ENCODE measurements at regions of chr3 and their contacts with region 1.

Region 1: GRCh38 chr3:42749753-42750231 is 23.3 kb downstream of the CCDC13 start:
- DNase-seq: no peak
- H3K4me3 ChIP-seq: no peak overlapping the region
- H3K27ac ChIP-seq: no peak overlapping the region
- H3K4me1 ChIP-seq: peaks cover 0 to 11% (median 4%) of the 10 kb centered on the region in 4 experiments; a peak in 5 of 7 replicates
- H3K27me3 ChIP-seq: no peaks in the 10 kb centered on the region; a peak in 2 of 7 replicates
- CTCF ChIP-seq: peak; percentile 52 to 75 (median 64)
- EP300 ChIP-seq: no peak
- POLR2A ChIP-seq: no peak
- RAD21 ChIP-seq: peak; percentile 65 to 73

Region 2: DNA sequence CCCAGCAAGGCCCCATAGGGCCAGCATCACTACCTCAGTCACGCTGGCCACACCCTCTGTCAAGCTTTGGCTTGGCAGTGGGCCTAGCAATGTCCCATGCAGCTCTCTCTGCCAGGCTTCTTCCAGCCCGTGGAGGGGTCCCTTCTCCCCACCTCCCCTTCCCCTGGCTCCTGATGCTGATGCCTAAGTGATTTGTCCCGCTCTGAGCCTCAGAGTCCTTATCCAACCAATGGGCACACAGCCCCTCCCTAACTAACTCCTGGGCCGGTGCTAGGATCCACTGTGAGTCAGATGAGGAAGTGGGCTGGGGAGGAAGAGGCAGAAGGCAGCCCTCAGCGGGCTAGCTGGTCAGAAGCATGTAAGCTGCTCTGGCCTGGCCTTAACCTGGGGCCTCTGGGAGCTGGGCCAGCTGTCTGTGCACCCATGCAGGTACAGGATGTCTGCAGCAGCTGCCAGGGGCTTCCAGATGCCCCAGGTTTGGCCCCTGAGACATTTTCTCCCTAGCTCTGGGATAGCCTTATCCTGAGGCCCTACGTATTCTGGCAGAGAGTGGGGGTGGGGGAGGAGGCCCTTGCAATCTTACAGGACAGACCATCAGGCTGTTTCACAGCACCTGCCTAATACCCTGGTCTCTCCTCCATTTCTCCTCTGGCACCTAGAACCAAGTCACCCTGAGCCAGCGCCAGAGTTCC is 97.0 kb before region 1 on chr3:
- CTCF ChIA-PET with region 1: interaction called, 54 read pairs
- POLR2A ChIA-PET with region 1: interaction called, 9 read pairs
- DNase-seq: peak in 1 of 2 experiments; percentile 58
- H3K4me3 ChIP-seq: peak overlapping the region in 1 of 4 experiments; percentile 74; a peak in 1 of 8 replicates
- H3K27ac ChIP-seq: no peak overlapping the region
- H3K4me1 ChIP-seq: peaks cover 6 to 39% (median 30%) of the 10 kb centered on the region in 4 experiments
- H3K27me3 ChIP-seq: no peaks in the 10 kb centered on the region
- CTCF ChIP-seq: no peak
- EP300 ChIP-seq: no peak
- POLR2A ChIP-seq: no peak
- RAD21 ChIP-seq: no peak

Region 3: GRCh38 chr3:42690766-42691680 is 58.8 kb before region 1 on chr3:
- CTCF ChIA-PET with region 1: interaction called, 14 read pairs
- POLR2A ChIA-PET with region 1: interaction called, 3 read pairs
- DNase-seq: no peak
- H3K4me3 ChIP-seq: no peak overlapping the region
- H3K27ac ChIP-seq: no peak overlapping the region
- H3K4me1 ChIP-seq: peaks cover 0 to 10% (median 4%) of the 10 kb centered on the region in 4 experiments; a peak in 4 of 7 replicates
- H3K27me3 ChIP-seq: 0 out of 7 replicates have a peak, but pooled peaks cover 0 to 2% (median 0%) of the 10 kb centered on the region in 4 experiments
- CTCF ChIP-seq: no peak
- EP300 ChIP-seq: no peak
- POLR2A ChIP-seq: no peak
- RAD21 ChIP-seq: no peak

Region 4: DNA sequence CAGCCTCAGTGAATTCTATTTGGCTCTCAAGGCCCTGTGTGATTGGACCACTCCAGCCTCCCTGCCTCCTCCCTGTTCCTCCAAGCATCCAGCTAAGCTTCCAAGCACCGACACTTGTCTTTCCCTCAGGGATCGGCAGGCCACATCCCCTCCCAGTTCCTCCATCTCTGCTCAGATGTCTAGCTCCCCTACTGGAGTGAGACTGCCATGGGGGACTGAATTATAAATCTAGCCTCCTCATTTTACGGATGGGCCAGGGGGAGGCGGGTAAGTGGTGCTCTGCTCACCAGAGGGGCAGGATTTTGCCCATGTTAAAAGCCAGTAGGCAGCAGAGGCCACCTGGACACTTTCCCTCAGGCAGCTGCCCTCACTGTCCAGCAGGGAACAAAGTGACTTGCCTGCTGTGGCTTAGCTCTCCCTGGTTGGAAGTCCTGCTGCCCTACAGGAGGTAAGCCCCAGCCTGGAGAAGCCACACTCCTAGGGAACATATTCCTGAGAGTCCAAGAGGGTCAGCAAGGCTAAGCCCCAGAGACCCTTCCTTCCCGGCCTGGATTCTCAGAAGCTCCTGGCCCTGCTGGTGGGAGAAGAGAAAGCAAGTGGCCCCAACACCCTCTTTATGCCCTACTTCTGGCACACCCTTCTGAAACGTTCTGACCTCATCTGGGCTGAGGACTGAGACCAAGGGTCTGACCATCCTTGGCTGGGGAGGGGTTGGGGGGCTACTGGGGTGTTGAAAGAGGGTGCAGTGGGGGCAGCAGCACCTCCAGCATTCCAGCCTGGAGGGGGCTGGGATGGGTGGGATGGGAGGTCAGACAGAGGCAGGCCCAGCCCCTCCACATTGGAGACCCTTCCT is 38.1 kb before region 1 on chr3:
- CTCF ChIA-PET with region 1: interaction called, 53 read pairs
- POLR2A ChIA-PET with region 1: no interaction called
- DNase-seq: peak in 1 of 2 experiments; percentile 44
- H3K4me3 ChIP-seq: no peak overlapping the region
- H3K27ac ChIP-seq: no peak overlapping the region
- H3K4me1 ChIP-seq: no peaks in the 10 kb centered on the region; a peak in 2 of 7 replicates
- H3K27me3 ChIP-seq: no peaks in the 10 kb centered on the region; a peak in 1 of 7 replicates
- CTCF ChIP-seq: peak in 2 of 3 experiments; percentile 26 to 28; a peak in 2 of 4 replicates
- EP300 ChIP-seq: no peak
- POLR2A ChIP-seq: no peak
- RAD21 ChIP-seq: 0 out of 4 replicates have a peak, but pooled peaks of 1 of the 2 experiments have one; percentile 10

Region 5: DNA sequence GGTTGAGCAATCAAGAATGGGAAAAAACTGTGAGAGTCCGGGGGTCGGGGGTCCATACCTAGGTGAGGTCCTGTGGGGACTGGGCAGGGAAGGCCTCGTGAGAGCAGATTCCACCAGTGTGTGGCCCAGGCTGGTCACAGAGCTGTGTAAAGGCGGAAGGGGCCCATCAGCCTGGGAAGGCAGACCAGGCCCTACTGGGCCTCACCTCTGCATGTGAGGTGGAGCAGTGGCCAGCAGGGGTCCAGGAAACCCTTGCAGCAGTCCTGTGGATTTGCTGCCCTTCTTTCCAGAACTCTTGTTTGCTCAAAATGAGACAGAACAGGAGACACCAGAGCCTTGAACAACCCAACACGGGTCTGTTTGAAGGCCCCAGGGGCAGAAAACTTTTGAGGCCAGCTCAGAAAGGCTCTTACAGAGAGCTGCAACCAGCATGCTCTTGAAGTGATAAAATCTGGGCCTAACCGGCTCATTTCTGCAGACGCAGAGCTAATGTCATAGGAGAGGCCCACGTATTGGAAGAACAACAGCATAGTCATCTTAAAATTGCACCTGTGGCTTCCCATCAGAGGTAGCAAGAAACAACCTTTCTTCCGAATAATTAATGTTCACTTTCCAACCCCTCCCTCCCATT is 16.8 kb before region 1 on chr3:
- CTCF ChIA-PET with region 1: interaction called, 28 read pairs
- POLR2A ChIA-PET with region 1: interaction called, 4 read pairs
- DNase-seq: peak in 1 of 2 experiments; percentile 47
- H3K4me3 ChIP-seq: no peak overlapping the region
- H3K27ac ChIP-seq: no peak overlapping the region
- H3K4me1 ChIP-seq: peaks cover 0 to 33% (median 18%) of the 10 kb centered on the region in 4 experiments; a peak in 5 of 7 replicates
- H3K27me3 ChIP-seq: 0 out of 7 replicates have a peak, but pooled peaks cover 0 to 3% (median 0%) of the 10 kb centered on the region in 4 experiments
- CTCF ChIP-seq: peak in 2 of 3 experiments; percentile 24 to 40; a peak in 2 of 4 replicates
- EP300 ChIP-seq: no peak
- POLR2A ChIP-seq: no peak
- RAD21 ChIP-seq: no peak; a peak in 1 of 4 replicates

Region 6: GRCh38 chr3:42763021-42763420 is 13.2 kb after region 1 on chr3:
- CTCF ChIA-PET with region 1: interaction called, 47 read pairs
- POLR2A ChIA-PET with region 1: no interaction called
- DNase-seq: no peak
- H3K4me3 ChIP-seq: no peak overlapping the region
- H3K27ac ChIP-seq: no peak overlapping the region
- H3K4me1 ChIP-seq: peaks cover 1 to 12% (median 3%) of the 10 kb centered on the region in 4 experiments; a peak in 4 of 7 replicates
- H3K27me3 ChIP-seq: no peaks in the 10 kb centered on the region
- CTCF ChIP-seq: no peak
- EP300 ChIP-seq: no peak
- POLR2A ChIP-seq: no peak
- RAD21 ChIP-seq: no peak

Region 7: GRCh38 chr3:43273416-43273815 is 523.6 kb after region 1 on chr3:
- CTCF ChIA-PET with region 1: no interaction called
- POLR2A ChIA-PET with region 1: no interaction called
- DNase-seq: no peak
- H3K4me3 ChIP-seq: no peak overlapping the region
- H3K27ac ChIP-seq: no peak overlapping the region
- H3K4me1 ChIP-seq: no peaks in the 10 kb centered on the region
- H3K27me3 ChIP-seq: no peaks in the 10 kb centered on the region
- CTCF ChIP-seq: no peak
- EP300 ChIP-seq: no peak
- POLR2A ChIP-seq: no peak
- RAD21 ChIP-seq: no peak